Right ventricle myocardium inferior (tissue), 1 donor: ENCODE measurements at regions of chr1 and their contacts with region 1.

Region 1: DNA sequence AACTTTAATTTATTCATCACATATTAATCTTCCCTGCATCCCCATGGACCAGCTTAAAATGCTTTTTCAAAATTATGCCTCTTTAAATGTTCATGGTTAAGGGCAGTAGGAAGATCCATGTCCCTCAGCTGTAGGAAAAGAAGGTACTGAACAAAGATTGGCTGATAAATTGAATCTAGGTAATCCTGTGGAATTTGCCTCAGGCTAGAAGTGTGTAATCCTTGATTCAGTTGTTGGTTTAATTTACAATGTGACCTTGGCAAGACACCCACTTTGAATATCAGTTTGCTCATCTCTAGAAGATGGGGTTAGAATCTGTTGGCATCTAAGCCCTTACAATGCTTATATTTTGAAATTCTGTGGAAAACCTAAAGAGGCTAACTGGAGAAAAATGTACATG is 6.1 kb downstream of the TTC4 start:
- DNase-seq: no peak
- ATAC-seq: no peak

Region 2: GRCh38 chr1:54558434-54559030 is 163.2 kb before region 1 on chr1:
- intact Hi-C with region 1: no loop called
- DNase-seq: no peak
- ATAC-seq: peak; percentile 26

Region 3: GRCh38 chr1:54671985-54672608 is 49.6 kb before region 1 on chr1:
- intact Hi-C with region 1: loop called (anchors 2 kb)
- DNase-seq: no peak
- ATAC-seq: no peak

Region 4: DNA sequence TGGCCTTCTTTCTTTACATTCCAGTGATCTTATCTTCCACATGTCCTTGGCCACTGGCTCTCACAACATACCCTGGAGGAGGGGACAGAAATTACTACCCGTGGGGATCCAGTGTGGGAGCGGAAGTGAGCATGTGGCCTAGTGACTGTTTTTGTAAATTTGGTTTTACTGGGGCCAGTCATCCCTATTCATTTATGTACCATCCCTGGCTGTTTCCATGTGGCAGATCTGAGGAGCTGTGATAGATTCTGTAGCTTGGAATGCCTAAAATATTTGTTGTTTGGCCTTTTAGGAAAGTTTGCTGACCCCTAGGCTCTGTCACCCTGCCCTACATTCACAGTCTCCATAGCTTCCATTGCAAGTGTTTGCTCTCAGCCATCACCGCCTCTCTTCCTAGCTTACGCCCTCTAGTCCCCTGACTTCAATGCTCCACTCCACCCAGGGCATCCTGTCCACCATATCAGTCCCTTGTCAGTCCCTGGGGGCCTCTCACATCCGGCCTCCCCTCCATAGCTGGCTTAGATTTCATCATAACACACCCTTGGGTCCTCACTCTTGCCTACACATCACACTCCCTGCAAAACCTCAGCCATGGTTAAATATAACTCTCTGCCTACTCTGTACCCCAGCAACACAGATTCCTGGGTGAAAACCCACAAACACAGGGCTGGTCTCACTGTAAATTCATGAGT is 139.5 kb after region 1 on chr1:
- intact Hi-C with region 1: no loop called
- DNase-seq: no peak
- ATAC-seq: peak; percentile 28